Activated CD8-positive, alpha-beta memory T cell treated with anti-CD3 and anti-CD28 coated beads, Interleukin-2, amount 10 ng/mL, durations not matched to agents 7 days and 5 days (primary cell): ENCODE measurements at regions of chr11 and their contacts with region 1.

Region 1: DNA sequence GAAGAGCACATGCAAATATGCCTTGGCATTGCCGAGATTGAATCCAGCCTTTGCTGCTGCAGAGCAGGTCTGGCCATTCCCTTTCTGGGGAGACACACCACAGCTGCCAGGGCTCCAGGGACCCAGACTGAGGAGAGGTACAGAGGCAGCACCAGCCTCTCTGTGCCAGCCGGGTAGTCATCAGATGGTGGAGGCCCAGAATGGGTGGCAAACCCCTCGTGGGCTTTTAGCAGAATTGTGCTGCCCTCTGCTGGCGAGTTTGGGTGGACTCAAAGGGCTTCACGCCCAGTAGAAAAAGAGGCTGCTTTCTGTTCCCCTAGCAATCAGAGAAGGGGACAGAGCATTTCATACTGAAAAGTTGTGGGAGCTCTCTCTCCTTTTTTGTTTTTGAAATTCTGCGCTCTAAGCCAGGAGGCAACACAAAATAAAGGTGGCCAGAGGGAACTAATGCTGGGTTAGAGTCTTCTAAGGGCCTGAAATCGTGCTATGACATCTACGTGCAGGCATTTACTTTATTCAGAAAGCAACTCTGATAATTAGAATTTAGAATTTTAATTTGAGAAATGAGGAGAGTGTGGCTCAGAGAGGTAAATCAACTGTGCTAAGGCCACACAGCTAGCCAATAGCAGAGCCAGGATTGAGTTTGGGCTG is 158.8 kb upstream of the NAV2 start:
- DNase-seq: peak; percentile 75
- ATAC-seq: peak; percentile 64
- H3K4me3 Mint-ChIP-seq: no peak overlapping the region
- H3K27ac Mint-ChIP-seq: no peak overlapping the region
- H3K4me1 Mint-ChIP-seq: no peaks in the 10 kb centered on the region
- H3K27me3 Mint-ChIP-seq: peaks cover 11% of the 10 kb centered on the region

Region 2: DNA sequence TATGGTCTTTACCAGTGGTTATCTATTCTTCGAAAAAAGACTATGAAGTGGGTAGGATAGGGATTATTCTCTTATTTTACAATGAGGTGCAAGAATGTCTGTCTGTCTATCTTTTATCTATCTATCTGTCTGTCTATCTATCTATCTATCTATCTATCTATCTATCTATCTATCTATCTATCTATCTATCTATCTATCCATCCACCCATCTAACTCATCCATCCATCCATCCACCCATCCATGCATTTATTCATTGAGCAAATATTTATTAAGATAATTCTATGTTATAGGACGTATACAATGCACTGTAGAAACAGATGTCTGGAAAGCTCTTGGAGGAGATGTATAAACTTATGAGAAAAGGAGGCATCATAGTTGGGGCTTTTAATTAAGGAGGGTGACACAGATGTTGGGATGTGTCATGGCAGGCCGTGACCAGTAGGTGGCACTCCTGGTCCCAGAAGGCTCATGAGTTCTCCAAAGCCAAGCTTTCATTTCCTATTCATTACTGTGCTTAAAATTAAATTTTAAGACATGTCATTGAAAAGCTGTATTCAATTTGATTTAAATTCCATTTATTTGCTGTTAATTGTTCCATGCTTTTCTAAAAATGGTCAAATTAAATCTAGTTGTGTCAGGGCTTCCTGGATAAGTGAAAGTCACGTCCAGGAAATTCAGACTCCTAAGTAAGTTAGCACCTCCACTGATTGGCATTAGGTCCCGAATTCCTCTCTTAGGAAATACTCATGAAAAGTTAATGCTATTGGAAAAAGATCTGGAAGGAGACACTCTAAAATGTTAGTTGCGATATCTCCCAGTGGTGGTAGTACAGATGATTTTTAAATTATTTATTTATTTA is 294.1 kb before region 1 on chr11:
- CTCF ChIA-PET with region 1: interaction called, 16 read pairs
- DNase-seq: peak; percentile 80
- ATAC-seq: peak; percentile 71
- H3K4me3 Mint-ChIP-seq: no peak overlapping the region
- H3K27ac Mint-ChIP-seq: no peak overlapping the region
- H3K4me1 Mint-ChIP-seq: peaks cover 2% of the 10 kb centered on the region
- H3K27me3 Mint-ChIP-seq: peaks cover 5% of the 10 kb centered on the region

Region 3: DNA sequence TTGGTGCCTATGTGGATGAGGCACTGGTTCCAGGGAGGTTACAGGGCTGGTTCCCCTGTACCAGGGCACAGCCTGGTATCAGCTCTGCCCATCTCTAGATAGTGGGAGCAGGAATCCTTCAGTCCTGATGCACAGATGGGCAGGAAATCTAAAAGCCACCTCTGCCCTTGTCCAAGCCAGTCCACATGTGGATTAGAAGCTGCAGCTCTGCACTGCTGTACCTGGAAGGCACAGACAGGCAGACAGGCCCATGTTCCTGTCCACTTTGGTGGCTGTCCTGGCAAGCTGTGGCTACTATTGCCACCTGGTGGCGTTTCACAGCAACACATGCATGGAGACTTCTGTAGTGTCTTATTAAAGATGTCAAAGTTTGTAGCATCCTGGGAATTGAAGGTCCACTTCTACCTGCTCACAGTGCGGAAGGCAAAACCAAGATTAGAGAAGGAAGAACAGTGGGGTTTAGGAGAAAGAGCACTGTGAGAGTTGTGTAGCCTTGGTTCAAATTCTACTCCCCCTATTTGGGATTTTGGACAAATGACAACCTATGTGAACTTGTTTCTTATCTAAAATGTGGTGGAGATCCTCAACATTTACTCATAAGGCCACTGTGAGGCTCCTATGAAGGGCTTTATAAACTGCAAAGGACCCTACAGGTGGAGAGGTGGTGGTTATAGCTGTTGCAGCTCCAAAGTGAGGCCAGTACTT is 188.9 kb after region 1 on chr11:
- CTCF ChIA-PET with region 1: interaction called, 16 read pairs
- DNase-seq: peak; percentile 77
- ATAC-seq: peak; percentile 77
- H3K4me3 Mint-ChIP-seq: no peak overlapping the region
- H3K27ac Mint-ChIP-seq: no peak overlapping the region
- H3K4me1 Mint-ChIP-seq: no peaks in the 10 kb centered on the region
- H3K27me3 Mint-ChIP-seq: peaks cover 7% of the 10 kb centered on the region